ENCODE measurements at regions of chr6 and their contacts with region 1.

Region 1: GRCh38 chr6:35342258-35343091 is at the start of gene PPARD:
- DNase-seq: peak; percentile 99
- H3K4me3 Mint-ChIP-seq: peak within 1 kb of the TSS; percentile 89
- H3K27ac Mint-ChIP-seq: peak within 1 kb of the TSS; percentile 90
- H3K4me1 Mint-ChIP-seq: peaks cover 44% of the 10 kb centered on the region
- H3K27me3 Mint-ChIP-seq: no peaks in the 10 kb centered on the region
- total RNA-seq, gene PPARD: 19.9 to 20.9 TPM

Region 2: GRCh38 chr6:35327349-35328027 is 15.0 kb before region 1 on chr6:
- CTCF ChIA-PET with region 1: interaction called, 21 read pairs
- POLR2A ChIA-PET with region 1: no interaction called
- intact Hi-C with region 1: no loop called
- DNase-seq: peak; percentile 87
- H3K4me3 Mint-ChIP-seq: no peak overlapping the region
- H3K27ac Mint-ChIP-seq: peak overlapping the region; percentile 67
- H3K4me1 Mint-ChIP-seq: peaks cover 18% of the 10 kb centered on the region
- H3K27me3 Mint-ChIP-seq: no peaks in the 10 kb centered on the region

Region 3: DNA sequence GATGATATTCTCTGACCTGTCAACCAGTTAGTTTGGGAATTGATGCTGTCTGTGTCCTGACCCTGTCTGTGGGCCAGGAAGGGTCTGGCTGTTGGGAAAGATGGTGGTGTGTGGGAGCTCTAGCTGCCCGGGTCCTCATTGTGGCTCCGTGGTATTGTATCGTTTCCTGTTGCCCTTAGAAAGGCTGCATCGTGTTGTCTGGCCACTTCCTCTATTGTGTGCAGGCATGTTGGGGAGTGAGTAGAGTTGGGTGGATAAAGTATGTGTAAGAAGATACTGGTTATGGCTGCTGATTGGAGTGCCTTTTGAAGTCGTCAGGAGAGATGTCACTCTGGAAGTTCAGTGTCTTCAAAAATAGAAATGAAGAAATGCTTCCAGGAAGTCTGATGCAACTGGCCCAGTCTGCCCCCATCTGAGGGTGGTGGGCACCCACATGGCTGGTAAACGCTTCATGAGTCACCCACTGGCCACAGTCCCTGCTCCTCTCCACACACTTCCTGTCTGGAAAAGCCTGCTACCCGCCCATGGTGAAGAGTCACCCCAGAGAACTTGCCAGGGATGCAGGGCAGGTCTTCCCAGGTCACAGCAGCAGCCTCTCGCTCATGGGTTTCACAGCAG is 27.8 kb after region 1 on chr6:
- CTCF ChIA-PET with region 1: interaction called, 4 read pairs
- POLR2A ChIA-PET with region 1: no interaction called
- intact Hi-C with region 1: loop called (anchors 2 kb)
- DNase-seq: peak; percentile 73
- H3K4me3 Mint-ChIP-seq: peak overlapping the region; percentile 27
- H3K27ac Mint-ChIP-seq: peak overlapping the region; percentile 91
- H3K4me1 Mint-ChIP-seq: peaks cover 59% of the 10 kb centered on the region
- H3K27me3 Mint-ChIP-seq: no peaks in the 10 kb centered on the region

Region 4: DNA sequence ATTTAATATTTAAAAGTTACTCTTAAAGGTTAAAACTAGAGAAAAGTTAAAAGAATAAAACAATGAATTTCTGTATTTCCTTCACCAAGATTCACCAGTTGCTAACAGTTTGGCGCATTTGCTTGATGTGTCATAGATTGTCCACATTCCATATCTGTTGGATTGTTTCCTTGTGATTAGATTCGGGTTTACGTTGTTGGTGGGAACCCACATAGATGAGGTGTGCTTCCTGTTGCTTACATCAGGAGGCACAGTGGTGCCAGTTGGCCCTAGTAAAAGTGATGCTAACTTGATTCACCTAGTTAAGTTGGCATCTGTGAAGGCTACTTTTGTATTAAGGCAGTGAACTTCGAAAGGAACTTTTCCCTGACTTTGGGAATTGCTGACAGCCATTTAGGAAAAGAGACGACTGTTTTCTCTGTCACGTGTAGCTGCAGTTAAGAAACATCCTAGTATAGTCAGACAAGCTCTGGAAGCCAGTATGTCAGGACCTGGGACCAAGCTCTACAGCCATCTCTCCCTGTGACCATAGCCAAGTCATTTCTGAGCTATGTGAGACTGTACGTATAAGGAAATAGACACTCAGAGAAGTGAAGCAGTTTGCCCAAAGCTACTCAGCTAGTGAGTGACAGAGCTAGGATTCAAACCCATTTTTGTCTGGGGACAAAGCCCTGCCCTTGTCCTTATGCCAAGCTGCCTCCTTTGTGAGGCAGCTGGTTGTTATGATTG is 48.9 kb after region 1 on chr6:
- CTCF ChIA-PET with region 1: interaction called, 4 read pairs
- POLR2A ChIA-PET with region 1: no interaction called
- intact Hi-C with region 1: loop called (anchors 10 kb)
- DNase-seq: peak; percentile 28
- H3K4me3 Mint-ChIP-seq: no peak overlapping the region
- H3K27ac Mint-ChIP-seq: peak overlapping the region; percentile 55
- H3K4me1 Mint-ChIP-seq: peaks cover 51% of the 10 kb centered on the region
- H3K27me3 Mint-ChIP-seq: no peaks in the 10 kb centered on the region

Region 5: GRCh38 chr6:35415065-35415991 is 72.9 kb after region 1 on chr6:
- CTCF ChIA-PET with region 1: interaction called, 11 read pairs
- POLR2A ChIA-PET with region 1: no interaction called
- intact Hi-C with region 1: loop called (anchors 2 kb)
- DNase-seq: peak; percentile 53
- H3K4me3 Mint-ChIP-seq: no peak overlapping the region
- H3K27ac Mint-ChIP-seq: peak overlapping the region; percentile 59
- H3K4me1 Mint-ChIP-seq: peaks cover 39% of the 10 kb centered on the region
- H3K27me3 Mint-ChIP-seq: no peaks in the 10 kb centered on the region

Region 6: DNA sequence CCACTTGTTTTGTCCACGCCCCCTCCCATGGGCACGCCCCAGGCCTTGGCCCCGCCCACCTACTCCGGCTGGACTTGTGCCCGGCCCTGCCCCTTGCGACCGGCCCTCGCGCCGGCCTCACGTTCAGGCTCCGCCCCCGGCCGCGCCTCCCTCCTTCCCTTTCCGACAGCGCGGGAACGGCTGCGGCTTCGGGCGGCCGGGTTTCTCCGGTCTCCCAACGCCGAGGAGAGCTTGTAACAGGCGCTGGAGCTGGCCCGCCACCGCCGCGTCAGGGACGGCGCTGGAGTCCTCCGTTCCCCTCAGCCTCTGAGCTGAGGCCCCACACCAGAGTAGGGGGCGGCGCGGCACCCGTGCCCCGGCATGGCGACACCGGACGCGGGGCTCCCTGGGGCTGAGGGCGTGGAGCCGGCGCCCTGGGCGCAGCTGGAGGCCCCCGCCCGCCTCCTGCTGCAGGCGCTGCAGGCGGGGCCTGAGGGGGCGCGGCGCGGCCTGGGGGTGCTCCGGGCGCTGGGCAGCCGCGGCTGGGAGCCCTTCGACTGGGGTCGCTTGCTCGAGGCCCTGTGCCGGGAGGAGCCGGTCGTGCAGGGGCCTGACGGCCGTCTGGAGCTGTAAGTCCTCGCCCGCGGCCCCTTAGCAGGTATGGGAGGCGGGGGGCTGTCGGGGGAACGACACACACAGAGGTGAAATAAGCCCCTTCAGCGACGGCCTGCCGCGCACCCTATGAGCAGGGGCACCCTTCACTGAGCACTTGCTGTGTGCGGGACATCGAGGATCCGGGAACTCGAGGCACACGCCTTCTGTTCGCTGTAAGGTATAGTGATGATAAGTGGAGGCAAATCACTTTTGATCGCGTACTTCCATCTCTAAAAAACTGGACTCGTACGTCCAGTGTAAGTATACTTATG is 110.0 kb after region 1 on chr6 and contains the start of gene FANCE:
- CTCF ChIA-PET with region 1: interaction called, 219 read pairs
- POLR2A ChIA-PET with region 1: interaction called, 8 read pairs
- intact Hi-C with region 1: loop called (anchors 1 kb)
- DNase-seq: peak; percentile 97
- H3K4me3 Mint-ChIP-seq: peak within 1 kb of the TSS; percentile 80
- H3K27ac Mint-ChIP-seq: peak within 1 kb of the TSS; percentile 28
- H3K4me1 Mint-ChIP-seq: peaks cover 32% of the 10 kb centered on the region
- H3K27me3 Mint-ChIP-seq: no peaks in the 10 kb centered on the region
- total RNA-seq, gene FANCE: 18.9 to 19.2 TPM

Region 7: DNA sequence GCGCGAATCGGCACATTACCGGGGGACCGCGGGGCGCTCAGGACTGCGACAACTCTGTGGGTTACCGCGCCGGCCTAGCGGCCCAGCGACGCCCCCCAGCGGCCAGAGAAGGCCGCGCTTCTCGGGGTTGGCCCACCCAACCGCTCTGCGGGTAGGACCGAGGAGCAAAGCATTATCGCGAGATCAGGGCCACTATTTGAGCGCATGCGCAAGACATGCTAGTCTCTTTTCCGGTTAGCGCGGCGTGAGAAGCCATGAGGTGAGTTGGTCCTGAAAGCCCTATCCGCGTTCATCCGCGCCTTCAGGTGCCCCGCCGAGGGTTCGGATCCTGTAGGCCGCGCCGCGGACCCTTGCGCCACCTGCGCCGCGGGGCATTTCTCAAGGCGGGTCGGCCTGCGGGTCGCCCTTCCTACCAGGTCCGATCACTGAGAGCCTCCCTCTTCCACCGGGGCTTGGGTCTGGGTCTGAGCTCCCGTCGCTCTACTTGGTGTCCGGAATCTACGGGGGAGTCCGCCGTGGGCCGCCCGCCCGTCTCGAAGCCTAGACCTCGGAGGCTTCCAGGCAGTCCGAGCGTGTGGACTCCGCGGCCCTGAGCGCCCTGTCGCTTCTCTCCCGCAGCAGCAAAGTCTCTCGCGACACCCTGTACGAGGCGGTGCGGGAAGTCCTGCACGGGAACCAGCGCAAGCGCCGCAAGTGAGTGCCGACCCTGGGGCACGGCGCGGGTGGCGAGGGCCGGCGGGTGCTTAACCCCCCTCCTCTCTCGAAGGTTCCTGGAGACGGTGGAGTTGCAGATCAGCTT is 125.9 kb after region 1 on chr6 and contains the start of gene RPL10A:
- CTCF ChIA-PET with region 1: interaction called, 39 read pairs
- POLR2A ChIA-PET with region 1: interaction called, 6 read pairs
- intact Hi-C with region 1: loop called (anchors 1 kb)
- DNase-seq: peak; percentile 97
- H3K4me3 Mint-ChIP-seq: peak within 1 kb of the TSS; percentile 95
- H3K27ac Mint-ChIP-seq: peak within 1 kb of the TSS; percentile 97
- H3K4me1 Mint-ChIP-seq: peaks cover 36% of the 10 kb centered on the region
- H3K27me3 Mint-ChIP-seq: no peaks in the 10 kb centered on the region
- total RNA-seq, gene RPL10A: 2,144 to 2,205 TPM

Region 8: DNA sequence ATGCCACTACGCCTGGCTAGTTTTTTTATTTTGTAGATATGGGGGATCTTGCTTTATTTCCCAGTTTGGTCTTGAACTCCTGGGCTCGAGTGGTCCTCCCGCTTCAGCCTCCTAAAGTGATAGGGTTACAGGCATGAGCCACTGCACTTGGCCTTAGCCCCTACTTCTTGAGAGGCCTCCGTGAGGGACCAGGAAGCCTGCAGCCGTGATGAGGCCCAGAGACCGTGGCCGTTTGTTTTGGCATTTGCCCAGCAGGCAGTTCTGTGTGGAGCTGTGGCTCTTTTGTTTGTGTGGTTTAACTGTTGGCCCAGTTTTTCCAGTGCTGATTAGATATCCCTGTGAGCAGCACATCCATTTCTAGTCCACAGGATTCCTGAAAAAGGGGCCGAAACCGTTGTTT is 1291.4 kb after region 1 on chr6:
- CTCF ChIA-PET with region 1: no interaction called
- POLR2A ChIA-PET with region 1: no interaction called
- intact Hi-C with region 1: no loop called
- DNase-seq: no peak
- H3K4me3 Mint-ChIP-seq: no peak overlapping the region
- H3K27ac Mint-ChIP-seq: no peak overlapping the region
- H3K4me1 Mint-ChIP-seq: no peaks in the 10 kb centered on the region
- H3K27me3 Mint-ChIP-seq: no peaks in the 10 kb centered on the region

Measured in activated CD4-positive, alpha-beta memory T cell treated with anti-CD3 and anti-CD28 coated beads for 36 hours (primary cell).